Heart left ventricle (tissue), 16 donors: ENCODE measurements at regions of chr1 and their contacts with region 1.

Region 1: DNA sequence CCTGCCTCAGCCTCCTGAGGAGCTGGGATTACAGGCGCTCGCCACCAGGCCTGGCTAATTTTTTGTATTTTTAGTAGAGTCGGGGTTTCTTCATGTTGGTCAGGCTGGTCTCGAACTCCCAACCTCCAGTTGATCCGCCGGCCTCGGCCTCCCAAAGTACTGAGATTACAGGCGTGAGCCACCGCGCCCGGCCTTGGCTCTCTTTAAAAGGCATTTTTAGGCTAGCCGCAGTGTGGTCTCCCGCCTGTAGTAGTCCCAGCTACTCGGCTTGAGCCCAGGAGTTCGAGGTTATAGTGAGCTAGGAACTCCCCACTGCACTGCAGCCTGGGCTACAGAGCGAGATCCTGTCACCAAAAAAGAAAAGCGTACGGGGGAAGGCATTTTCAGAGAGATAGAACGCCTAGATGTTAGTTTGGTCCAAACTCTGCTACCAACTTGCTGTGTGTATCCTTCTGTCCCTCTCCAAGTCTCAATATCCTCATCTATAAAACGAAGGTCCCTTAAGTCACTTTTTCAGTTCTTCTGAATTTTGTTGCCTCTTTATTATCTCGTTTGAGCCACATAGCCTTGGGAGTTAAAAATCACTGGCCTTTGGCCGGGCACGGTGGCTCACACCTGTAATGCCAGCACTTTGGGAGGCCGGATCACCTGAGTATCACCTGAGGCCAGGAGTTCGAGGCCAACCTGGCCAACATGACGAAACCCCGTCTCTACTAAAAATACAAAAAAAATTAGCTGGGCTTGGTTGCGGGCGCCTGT is 734 bp downstream of the MED18 start:
- DNase-seq: peak in 2 of 5 donors; percentile 20 to 33
- ATAC-seq: peak; percentile 14 to 29 (median 21)
- H3K4me3 ChIP-seq: peak overlapping the region; percentile 25 to 92 (median 73)
- H3K27ac ChIP-seq: peak overlapping the region; percentile 71 to 93 (median 86)
- H3K4me1 ChIP-seq: peaks cover 0 to 34% (median 13%) of the 10 kb centered on the region in 12 donors
- H3K27me3 ChIP-seq: no peaks in the 10 kb centered on the region
- CTCF ChIP-seq: peak in 1 of 12 donors; percentile 10
- POLR2A ChIP-seq: no peak

Region 2: DNA sequence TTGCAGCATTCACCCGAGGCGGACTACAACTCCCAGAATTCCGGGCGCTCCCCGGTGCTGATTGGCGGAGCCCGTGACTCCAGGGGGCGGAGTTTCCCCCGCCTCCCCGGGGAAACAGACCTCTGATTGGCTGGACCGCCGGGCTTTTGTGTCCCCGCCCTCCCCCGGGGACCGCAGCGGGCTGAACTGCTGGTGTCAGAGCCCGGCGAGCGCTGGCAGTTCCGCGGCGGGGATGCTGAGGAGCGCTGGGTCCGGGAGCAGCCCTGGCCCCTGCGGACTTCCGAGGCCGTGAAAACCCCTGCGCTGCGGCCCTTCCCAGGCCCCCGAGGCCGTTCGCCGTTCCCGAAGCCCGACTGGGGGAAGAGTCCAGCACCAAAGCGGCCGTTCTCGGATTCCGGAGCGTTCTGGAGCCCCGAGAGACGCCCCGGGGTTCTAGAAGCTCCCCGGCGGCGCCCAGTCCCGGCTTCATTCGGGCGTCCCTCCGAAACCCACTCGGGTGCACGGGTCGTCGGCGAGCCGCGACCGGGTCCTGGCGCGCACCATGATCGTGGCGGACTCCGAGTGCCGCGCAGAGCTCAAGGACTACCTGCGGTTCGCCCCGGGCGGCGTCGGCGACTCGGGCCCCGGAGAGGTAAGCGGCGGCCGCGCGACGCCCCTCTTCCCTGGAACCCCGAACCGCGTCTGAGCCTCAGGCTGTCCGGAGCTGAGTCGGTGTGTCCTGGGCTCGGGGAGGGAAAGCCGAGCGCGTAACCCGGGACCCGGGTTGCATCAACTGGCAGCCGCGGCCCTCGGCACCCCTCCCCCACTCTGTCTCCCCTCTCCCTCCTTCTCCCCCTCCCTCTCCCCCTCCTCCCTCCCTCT is 70.0 kb before region 1 on chr1 and contains the start of gene SESN2:
- intact Hi-C with region 1: loop called in 4 of 10 experiments (anchors 2 to 10 kb)
- DNase-seq: peak; percentile 99 to 100 (median 100)
- ATAC-seq: peak; percentile 98 to 99 (median 98)
- H3K4me3 ChIP-seq: peak within 1 kb of the TSS; percentile 58 to 99 (median 96)
- H3K27ac ChIP-seq: peak within 1 kb of the TSS in 11 of 12 donors; percentile 78 to 98 (median 87)
- H3K4me1 ChIP-seq: peaks cover 0 to 41% (median 22%) of the 10 kb centered on the region in 12 donors
- H3K27me3 ChIP-seq: peaks cover 0 to 2% (median 0%) of the 10 kb centered on the region in 9 donors
- CTCF ChIP-seq: no peak
- POLR2A ChIP-seq: peak; percentile 97 to 99
- total RNA-seq, gene SESN2: 2.4 to 6.4 (median 4.7) TPM

Region 3: DNA sequence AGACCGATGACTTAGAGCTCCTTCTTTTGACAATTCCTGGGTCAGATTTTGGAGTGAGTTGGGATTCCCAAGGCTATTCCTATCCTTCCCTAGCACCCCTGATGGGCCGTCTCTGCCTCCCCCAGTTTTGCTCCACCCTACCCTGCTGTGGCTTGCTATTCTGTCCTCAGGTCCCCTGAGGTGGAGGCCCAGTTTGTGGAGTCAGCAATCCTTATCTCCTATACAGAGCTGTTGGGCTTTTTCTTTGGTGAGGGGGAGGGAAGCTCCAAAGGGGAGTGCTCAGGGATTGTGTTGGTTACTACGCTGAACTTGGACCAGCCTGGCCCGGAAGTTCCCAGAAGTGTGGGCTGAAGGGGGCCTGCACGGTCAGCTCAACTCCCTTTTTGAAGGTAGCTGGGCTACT is 62.7 kb before region 1 on chr1:
- intact Hi-C with region 1: loop called in 2 of 10 experiments (anchors 5 kb)
- DNase-seq: no peak
- ATAC-seq: peak in 3 of 4 donors; percentile 24 to 45 (median 35)
- H3K4me3 ChIP-seq: no peak overlapping the region
- H3K27ac ChIP-seq: no peak overlapping the region
- H3K4me1 ChIP-seq: peaks cover 0 to 44% (median 18%) of the 10 kb centered on the region in 12 donors
- H3K27me3 ChIP-seq: no peaks in the 10 kb centered on the region
- CTCF ChIP-seq: no peak
- POLR2A ChIP-seq: no peak